Activated B cell treated with CpG ODN at 0.5 μM for 24 hours (primary cell): ENCODE measurements at regions of chr19 and their contacts with region 1.

Region 1: GRCh38 chr19:45215383-45216191 is 29.6 kb downstream of the EXOC3L2 start:
- DNase-seq: no peak
- ATAC-seq: no peak
- H3K4me3 Mint-ChIP-seq: no peak overlapping the region
- H3K27ac Mint-ChIP-seq: no peak overlapping the region
- H3K4me1 Mint-ChIP-seq: no peaks in the 10 kb centered on the region
- H3K27me3 Mint-ChIP-seq: peaks cover 43% of the 10 kb centered on the region
- CTCF ChIP-seq: no peak

Region 2: DNA sequence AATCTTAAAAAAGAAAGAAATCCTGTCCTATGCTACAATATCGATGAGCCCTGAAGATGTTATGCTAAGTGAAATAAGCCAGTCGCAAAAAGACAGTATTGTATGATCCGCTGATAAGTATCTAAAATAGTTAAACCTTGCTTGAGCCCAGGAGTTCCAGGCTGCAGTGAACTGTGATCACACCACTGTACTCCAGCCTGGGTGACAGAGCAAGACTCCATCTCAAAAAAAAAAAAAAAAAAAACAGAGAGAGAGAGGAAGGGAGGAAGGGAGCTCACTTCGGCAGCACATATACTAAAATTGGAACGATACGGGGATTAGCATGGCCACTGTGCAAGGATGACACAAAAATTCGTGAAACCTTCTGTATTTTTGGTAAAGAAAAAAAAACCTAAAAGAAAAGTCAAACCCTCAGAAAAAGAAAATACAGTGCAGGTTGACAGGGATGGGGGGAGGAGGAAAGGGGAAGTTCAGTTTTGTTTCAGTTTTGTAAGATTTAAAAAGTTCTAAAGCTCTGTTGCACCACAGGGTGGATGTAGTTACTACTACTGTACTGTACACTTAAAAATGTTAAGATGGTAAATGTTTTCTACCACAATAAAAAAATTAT is 168.3 kb before region 1 on chr19:
- CTCF ChIA-PET with region 1: no interaction called
- POLR2A ChIA-PET with region 1: no interaction called
- intact Hi-C with region 1: no loop called
- DNase-seq: no peak
- ATAC-seq: peak; percentile 73
- H3K4me3 Mint-ChIP-seq: peak overlapping the region; percentile 83
- H3K27ac Mint-ChIP-seq: peak overlapping the region; percentile 91
- H3K4me1 Mint-ChIP-seq: peaks cover 78% of the 10 kb centered on the region
- H3K27me3 Mint-ChIP-seq: no peaks in the 10 kb centered on the region
- CTCF ChIP-seq: no peak

Region 3: GRCh38 chr19:45147835-45148676 is 67.5 kb before region 1 on chr19:
- CTCF ChIA-PET with region 1: no interaction called
- POLR2A ChIA-PET with region 1: no interaction called
- intact Hi-C with region 1: no loop called
- DNase-seq: no peak
- ATAC-seq: no peak
- H3K4me3 Mint-ChIP-seq: no peak overlapping the region
- H3K27ac Mint-ChIP-seq: no peak overlapping the region
- H3K4me1 Mint-ChIP-seq: peaks cover 8% of the 10 kb centered on the region
- H3K27me3 Mint-ChIP-seq: peaks cover 10% of the 10 kb centered on the region
- CTCF ChIP-seq: no peak

Region 4: DNA sequence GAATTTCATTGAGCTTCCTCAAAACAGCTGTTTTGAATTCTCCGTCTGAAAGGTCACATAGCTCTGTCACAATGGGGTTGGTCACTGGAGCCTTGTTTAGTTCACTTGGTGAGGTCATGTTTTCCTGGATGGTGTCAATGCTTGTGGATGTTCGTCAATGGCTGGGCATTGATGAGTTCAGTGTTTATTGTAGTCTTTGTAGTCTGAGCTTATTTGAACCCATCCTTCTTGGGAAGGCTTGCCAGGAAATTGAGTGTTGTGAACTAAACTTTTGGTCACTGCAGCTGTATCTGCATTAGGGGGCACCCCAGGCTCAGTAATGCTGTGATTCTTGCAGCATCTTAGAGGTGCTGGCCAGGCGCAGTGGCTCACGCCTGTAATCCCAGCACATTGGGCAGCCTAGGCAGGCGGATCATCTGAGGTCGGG is 15.0 kb before region 1 on chr19:
- CTCF ChIA-PET with region 1: no interaction called
- POLR2A ChIA-PET with region 1: no interaction called
- intact Hi-C with region 1: no loop called
- DNase-seq: no peak
- ATAC-seq: no peak
- H3K4me3 Mint-ChIP-seq: no peak overlapping the region
- H3K27ac Mint-ChIP-seq: no peak overlapping the region
- H3K4me1 Mint-ChIP-seq: no peaks in the 10 kb centered on the region
- H3K27me3 Mint-ChIP-seq: no peaks in the 10 kb centered on the region
- CTCF ChIP-seq: no peak

Region 5: GRCh38 chr19:45264781-45265317 is 49.3 kb after region 1 on chr19:
- CTCF ChIA-PET with region 1: no interaction called
- POLR2A ChIA-PET with region 1: interaction called, 10 read pairs
- intact Hi-C with region 1: no loop called
- DNase-seq: no peak
- ATAC-seq: no peak
- H3K4me3 Mint-ChIP-seq: no peak overlapping the region
- H3K27ac Mint-ChIP-seq: no peak overlapping the region
- H3K4me1 Mint-ChIP-seq: no peaks in the 10 kb centered on the region
- H3K27me3 Mint-ChIP-seq: no peaks in the 10 kb centered on the region
- CTCF ChIP-seq: no peak

Region 6: GRCh38 chr19:45523642-45524256 is 308.2 kb after region 1 on chr19:
- CTCF ChIA-PET with region 1: no interaction called
- POLR2A ChIA-PET with region 1: no interaction called
- intact Hi-C with region 1: no loop called
- DNase-seq: peak; percentile 62
- ATAC-seq: peak; percentile 98
- H3K4me3 Mint-ChIP-seq: no peak overlapping the region
- H3K27ac Mint-ChIP-seq: peak overlapping the region; percentile 71
- H3K4me1 Mint-ChIP-seq: peaks cover 25% of the 10 kb centered on the region
- H3K27me3 Mint-ChIP-seq: no peaks in the 10 kb centered on the region
- CTCF ChIP-seq: peak; percentile 58